Activated CD8-positive, alpha-beta memory T cell treated with anti-CD3 and anti-CD28 coated beads, Interleukin-2, amount 10 ng/mL, durations not matched to agents 7 days and 5 days (primary cell): ENCODE measurements at regions of chr1 and their contacts with region 1.

Region 1: DNA sequence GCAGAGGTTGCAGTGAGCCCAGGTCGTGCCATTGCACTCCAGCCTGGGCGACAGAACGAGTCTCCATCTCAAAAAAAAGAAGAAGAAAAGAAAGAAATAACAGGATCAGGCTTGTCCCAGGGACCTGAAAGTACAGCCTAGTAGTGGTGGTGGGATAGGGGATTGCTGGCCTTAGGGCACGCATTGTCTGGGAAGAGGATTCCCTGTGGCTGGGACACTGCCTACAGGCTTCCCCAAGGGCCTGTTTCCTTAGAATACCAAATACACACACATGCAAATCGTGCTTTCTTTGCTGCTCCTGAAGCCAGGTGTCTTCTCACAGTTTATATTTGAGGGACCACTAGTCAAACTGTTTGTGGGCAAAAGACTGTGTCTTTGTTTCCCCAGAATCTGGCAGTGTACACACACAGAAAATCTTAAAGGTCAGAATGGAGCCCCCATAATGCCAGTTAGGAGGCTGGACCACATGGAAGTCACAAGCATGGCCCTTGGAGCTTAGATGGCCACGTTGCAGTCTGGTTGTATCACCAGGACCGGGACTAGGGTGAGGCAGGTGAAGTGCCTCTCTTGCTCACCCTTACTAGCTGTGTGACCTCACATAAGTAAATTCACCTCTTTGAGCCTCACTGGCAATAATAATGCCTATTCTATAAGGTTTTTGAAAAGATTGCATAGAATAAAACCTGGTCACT is 12.7 kb upstream of the ASAP3 start:
- DNase-seq: no peak
- ATAC-seq: peak; percentile 39
- H3K4me3 Mint-ChIP-seq: no peak overlapping the region
- H3K27ac Mint-ChIP-seq: no peak overlapping the region
- H3K4me1 Mint-ChIP-seq: peaks cover 5% of the 10 kb centered on the region
- H3K27me3 Mint-ChIP-seq: peaks cover 2% of the 10 kb centered on the region

Region 2: DNA sequence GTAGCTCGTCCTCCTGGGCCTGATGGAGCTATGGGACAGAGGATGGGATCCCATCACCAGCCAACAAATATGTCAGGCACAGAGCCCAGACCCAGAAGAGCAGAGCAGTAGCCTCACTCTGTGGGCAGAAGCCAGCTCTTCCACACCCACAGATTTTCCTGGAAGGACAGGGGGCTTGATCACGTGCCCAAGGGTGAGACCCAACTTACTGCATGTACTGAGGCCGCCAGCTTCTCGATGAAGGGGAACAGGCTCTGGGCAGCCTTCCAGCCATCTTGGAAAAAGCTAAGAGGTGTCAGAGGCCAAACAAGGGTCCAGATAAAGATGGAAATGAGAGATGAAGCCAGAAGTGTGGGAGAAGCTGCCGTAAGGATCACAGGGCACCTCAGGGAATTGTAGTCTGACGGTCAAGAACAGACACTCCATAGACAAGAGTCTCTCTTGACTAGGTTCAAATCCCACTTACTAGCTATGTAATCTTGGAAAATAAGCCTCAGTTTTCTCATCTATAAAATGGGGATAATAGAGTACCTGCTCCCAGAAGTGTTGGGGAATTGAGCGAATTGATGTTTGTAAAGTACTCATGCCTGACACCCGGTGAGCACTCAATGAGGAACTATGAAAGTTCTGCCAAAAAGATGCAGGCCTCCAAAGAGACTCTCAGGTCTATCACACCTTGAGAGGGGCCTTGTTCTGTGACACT is 55.0 kb before region 1 on chr1:
- CTCF ChIA-PET with region 1: no interaction called
- DNase-seq: no peak
- ATAC-seq: no peak
- H3K4me3 Mint-ChIP-seq: no peak overlapping the region
- H3K27ac Mint-ChIP-seq: no peak overlapping the region
- H3K4me1 Mint-ChIP-seq: no peaks in the 10 kb centered on the region
- H3K27me3 Mint-ChIP-seq: peaks cover 3% of the 10 kb centered on the region

Region 3: DNA sequence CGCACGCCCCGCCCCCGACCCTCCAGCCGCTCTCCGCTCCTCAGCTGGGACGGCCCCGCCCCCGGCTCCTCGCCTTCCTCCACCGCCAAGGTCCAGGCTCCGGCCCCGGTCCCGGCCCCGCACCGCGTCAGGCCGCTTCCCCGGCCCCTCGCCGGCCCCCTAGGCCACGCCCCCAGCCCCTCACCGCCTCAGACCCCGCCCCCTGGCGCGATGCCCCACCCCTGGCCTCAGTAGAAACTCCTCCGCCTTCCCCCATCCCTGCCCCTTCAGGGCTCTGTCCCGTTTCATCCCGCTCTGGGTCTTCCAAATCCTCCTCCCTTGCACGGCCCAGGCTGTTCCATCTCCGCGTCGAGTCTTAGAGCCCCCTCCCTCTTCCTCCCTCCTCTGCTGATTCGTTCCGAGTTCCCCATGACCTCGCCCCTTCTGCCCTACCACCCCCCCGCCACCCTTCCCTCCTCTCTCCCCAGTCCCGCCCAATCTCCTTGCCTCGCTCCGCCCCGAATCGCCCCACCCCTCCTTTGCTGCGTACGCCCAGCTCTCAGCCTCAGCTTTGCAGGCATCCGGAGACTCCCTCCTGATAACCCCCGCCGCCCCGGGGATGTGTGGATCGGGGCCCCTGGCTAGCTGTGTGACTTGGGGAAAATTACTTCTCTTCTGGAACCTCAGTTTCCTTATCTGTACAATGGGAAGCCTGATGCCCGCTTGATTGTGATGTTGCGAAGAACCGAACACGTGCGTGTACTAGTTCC is 12.2 kb before region 1 on chr1:
- CTCF ChIA-PET with region 1: interaction called, 55 read pairs
- DNase-seq: peak; percentile 93
- ATAC-seq: peak; percentile 91
- H3K4me3 Mint-ChIP-seq: peak overlapping the region; percentile 76
- H3K27ac Mint-ChIP-seq: peak overlapping the region; percentile 46
- H3K4me1 Mint-ChIP-seq: peaks cover 15% of the 10 kb centered on the region
- H3K27me3 Mint-ChIP-seq: peaks cover 66% of the 10 kb centered on the region

Region 4: GRCh38 chr1:23514111-23514679 is 17.6 kb after region 1 on chr1:
- CTCF ChIA-PET with region 1: interaction called, 308 read pairs
- DNase-seq: no peak
- ATAC-seq: no peak
- H3K4me3 Mint-ChIP-seq: no peak overlapping the region
- H3K27ac Mint-ChIP-seq: no peak overlapping the region
- H3K4me1 Mint-ChIP-seq: no peaks in the 10 kb centered on the region
- H3K27me3 Mint-ChIP-seq: no peaks in the 10 kb centered on the region

Region 5: DNA sequence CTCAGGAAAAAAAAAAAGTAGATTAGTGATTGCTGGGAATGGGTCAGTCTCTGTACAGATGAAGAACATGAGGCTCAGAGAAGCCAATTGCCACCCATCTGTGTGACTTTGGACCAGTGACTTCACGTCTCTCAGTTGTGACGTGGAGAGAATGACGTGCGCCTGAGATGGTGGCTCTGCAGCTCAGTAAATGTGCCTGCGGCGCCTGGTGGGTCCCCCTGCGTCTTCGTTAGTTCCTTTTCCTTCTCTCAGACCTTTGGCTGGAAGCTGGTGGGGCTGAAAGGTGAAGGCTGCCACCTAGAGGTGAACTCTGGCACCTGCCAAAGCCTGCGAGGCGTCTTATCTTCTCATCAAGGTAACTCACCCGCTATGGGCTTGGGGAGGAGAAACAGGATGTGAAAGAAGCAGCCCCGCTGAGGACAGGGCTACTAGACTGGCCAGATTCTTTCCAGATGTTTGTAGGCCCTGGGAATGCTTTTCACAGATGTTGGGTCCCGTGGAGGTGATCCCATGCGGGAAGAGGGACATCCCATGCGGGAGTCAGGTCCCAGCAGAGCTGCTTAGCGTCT is 43.1 kb after region 1 on chr1:
- CTCF ChIA-PET with region 1: interaction called, 308 read pairs
- DNase-seq: peak; percentile 97
- ATAC-seq: peak; percentile 96
- H3K4me3 Mint-ChIP-seq: peak overlapping the region; percentile 48
- H3K27ac Mint-ChIP-seq: peak overlapping the region; percentile 75
- H3K4me1 Mint-ChIP-seq: peaks cover 20% of the 10 kb centered on the region
- H3K27me3 Mint-ChIP-seq: peaks cover 12% of the 10 kb centered on the region

Region 6: DNA sequence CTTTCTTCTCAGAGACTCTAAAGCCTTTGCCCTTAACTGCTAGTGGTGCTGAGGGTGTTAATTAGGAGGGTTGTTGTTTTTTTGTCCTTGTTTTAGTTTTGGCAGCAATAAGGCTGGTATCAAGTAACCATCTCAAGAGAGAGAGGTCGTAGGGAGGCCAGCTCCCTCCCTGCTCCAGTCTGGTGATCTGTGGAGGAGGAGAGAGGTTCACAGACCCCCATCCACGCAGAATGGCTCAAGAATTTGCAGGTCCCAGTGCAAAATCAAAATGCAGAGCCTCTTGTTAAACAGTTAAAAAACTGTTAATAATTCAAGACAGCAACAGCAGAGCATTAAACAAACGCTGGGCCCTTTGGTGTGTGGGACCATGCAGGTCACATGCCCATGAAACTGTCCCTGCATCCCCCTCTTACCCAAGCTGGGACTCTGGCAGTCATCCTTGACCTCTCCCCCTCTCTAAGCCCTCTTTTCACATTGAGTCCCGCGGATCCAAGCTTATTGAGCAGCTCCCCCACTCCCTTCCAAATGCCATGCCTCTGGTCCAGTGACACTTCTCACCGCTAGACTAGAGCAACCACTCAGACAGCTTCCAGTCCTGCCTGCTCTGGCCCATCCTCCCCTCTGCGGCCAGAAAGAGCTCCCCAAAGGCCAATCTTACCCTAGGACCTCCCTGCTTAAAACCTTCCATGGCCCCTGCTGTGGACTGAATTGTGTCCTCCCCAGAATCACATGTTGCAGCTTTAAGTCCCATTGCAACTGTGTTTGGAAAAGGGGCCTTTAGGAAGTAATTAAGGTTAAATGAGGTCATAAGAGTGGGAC is 147.3 kb after region 1 on chr1:
- CTCF ChIA-PET with region 1: interaction called, 132 read pairs
- DNase-seq: no peak
- ATAC-seq: no peak
- H3K4me3 Mint-ChIP-seq: no peak overlapping the region
- H3K27ac Mint-ChIP-seq: no peak overlapping the region
- H3K4me1 Mint-ChIP-seq: no peaks in the 10 kb centered on the region
- H3K27me3 Mint-ChIP-seq: peaks cover 3% of the 10 kb centered on the region